ENCODE measurements at regions of chr22 and their contacts with region 1.

Region 1: DNA sequence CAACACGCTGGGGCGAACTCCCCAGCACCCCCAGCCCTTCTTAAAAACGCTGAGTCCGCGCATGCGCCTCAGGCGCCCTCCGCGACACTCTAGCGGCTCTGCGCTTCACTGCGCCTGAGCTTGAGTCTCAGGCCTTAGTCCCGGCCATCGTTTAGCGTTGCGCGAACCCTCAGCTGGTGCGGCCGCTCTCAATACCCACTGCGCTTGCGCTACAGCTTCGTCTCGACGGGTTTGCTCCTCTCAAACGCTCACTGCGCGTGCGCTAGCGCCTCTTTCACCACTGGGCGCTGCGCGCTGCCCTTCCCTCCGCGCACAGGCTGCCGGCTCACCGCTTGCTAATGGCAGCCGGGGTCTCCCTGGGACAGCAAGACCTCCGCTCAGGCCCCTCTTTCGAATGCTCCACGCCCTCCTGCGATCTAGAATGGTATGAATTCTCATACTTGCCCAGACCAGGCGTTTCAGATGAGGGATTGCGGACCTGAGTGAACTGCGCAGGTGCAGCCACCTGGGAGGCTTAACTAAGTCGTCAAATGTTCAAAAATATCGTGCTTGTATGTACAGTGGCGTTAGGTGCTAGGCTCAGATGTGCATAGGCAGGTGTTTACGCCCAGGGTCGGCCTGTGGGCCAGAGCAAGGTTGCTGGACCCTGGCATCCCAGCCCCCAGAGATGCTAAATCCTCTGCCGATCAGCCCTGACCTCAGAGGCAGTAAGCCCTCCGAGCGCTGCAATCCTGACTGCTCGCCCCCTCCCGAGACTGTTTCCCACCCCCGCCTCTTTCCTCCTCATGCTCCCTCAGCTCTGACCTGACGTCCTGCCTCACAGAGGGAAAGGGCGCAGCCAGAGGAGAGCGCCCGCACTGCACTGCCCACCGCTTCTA is at the start of gene SLC2A11:
- DNase-seq: peak; percentile 95
- H3K4me3 ChIP-seq: peak within 1 kb of the TSS; percentile 45 to 51
- H3K27ac ChIP-seq: peak within 1 kb of the TSS; percentile 87 to 89
- H3K4me1 ChIP-seq: no peaks in the 10 kb centered on the region
- H3K27me3 ChIP-seq: no peaks in the 10 kb centered on the region
- CTCF ChIP-seq: peak in 3 of 4 experiments; percentile 23 to 55 (median 53)
- POLR2A ChIP-seq: peak; percentile 83
- total RNA-seq, gene SLC2A11: 15.1 to 27.0 TPM

Region 2: GRCh38 chr22:23533328-23533762 is 324.5 kb before region 1 on chr22:
- intact Hi-C with region 1: loop called (anchors 5 kb)
- DNase-seq: no peak
- H3K4me3 ChIP-seq: no peak overlapping the region
- H3K27ac ChIP-seq: peak overlapping the region; percentile 77 to 88
- H3K4me1 ChIP-seq: peaks cover 10% of the 10 kb centered on the region
- H3K27me3 ChIP-seq: no peaks in the 10 kb centered on the region
- CTCF ChIP-seq: peak in 1 of 4 experiments; percentile 53
- POLR2A ChIP-seq: no peak

Region 3: GRCh38 chr22:23838681-23839468 is 19.0 kb before region 1 on chr22 and contains the start of gene DERL3:
- intact Hi-C with region 1: no loop called
- DNase-seq: peak; percentile 94
- H3K4me3 ChIP-seq: peak within 1 kb of the TSS; percentile 15 to 32
- H3K27ac ChIP-seq: no peak within 1 kb of the TSS
- H3K4me1 ChIP-seq: peaks cover 10% of the 10 kb centered on the region
- H3K27me3 ChIP-seq: no peaks in the 10 kb centered on the region
- CTCF ChIP-seq: no peak
- POLR2A ChIP-seq: no peak
- total RNA-seq, gene DERL3: 6.9 TPM in 1 of 2 donors, not detected in the other

Measured in prostate gland (tissue), 2 donors.